Colonic mucosa (tissue), 4 donors: ENCODE measurements at regions of chr2 and their contacts with region 1.

Region 1: DNA sequence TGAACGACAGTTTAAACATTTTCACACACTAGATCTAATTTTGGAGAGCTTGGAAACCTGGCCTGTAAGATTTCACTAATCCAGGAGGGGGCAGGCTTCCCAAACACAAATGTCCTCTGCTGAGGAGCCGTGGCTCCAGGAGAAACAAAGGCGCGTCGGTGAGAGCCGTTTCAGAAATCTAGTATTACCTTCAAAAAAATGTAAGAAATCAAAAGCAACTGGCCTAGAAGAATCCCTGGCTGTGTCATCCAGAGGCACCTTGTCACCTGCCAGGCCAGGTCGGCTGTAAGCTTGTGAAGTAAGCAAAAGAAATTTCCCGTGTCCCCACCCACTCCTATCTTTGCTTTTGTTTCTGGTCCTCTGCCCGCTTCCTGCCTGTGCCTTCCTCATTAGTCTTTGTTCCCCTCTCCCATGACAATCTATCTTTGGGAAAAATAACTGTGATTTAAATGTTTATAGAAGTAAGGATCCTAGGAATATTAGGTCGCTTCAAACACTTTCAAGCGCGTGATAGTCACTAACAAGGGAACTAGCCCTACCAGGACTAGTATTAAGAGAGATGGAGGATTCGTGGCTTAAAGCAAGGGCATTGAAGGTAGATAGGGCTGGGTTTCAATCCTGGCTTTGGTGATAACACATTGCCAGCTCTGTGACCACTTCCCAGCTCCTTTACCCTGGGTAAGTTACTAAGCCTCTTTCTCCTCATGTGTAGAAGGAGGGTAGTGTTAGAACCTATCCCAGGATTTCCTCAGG is 99.5 kb upstream of the STK39 start:
- DNase-seq: peak; percentile 81
- H3K4me3 ChIP-seq: peak overlapping the region; percentile 32
- H3K27ac ChIP-seq: peak overlapping the region; percentile 26
- H3K4me1 ChIP-seq: no peaks in the 10 kb centered on the region
- H3K27me3 ChIP-seq: no peaks in the 10 kb centered on the region
- CTCF ChIP-seq: peak; percentile 75

Region 2: DNA sequence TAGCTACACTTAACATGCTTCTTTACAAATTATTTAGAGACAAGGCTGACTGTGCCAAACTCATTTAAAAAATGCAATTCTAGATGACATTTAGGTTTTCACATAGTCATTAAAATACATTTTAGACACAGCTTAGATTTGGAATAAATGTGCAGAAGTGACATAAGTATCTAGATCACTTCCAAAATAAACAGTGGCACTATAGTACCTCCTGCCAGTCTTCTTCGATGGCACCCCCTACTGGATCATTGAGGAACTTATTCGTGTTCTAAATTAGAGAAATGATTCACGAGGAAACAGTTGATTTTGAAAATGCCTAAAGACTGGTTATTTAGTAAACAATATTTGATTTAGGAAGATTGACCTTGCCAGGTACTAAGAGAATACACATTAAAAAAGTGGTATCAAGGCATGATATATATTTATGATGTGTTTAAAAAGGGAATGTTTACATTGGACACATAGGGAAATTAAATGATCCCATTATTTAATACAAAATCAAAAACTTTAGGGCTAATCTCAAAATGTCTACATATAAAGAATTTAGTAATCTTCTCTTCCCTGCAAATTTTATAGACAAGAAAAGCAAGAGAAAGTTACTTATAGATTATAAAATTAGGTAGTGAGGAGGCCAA is 1134.8 kb before region 1 on chr2:
- intact Hi-C with region 1: no loop called
- DNase-seq: peak; percentile 57
- H3K4me3 ChIP-seq: no peak overlapping the region
- H3K27ac ChIP-seq: no peak overlapping the region
- H3K4me1 ChIP-seq: no peaks in the 10 kb centered on the region
- H3K27me3 ChIP-seq: no peaks in the 10 kb centered on the region
- CTCF ChIP-seq: peak; percentile 63

Region 3: DNA sequence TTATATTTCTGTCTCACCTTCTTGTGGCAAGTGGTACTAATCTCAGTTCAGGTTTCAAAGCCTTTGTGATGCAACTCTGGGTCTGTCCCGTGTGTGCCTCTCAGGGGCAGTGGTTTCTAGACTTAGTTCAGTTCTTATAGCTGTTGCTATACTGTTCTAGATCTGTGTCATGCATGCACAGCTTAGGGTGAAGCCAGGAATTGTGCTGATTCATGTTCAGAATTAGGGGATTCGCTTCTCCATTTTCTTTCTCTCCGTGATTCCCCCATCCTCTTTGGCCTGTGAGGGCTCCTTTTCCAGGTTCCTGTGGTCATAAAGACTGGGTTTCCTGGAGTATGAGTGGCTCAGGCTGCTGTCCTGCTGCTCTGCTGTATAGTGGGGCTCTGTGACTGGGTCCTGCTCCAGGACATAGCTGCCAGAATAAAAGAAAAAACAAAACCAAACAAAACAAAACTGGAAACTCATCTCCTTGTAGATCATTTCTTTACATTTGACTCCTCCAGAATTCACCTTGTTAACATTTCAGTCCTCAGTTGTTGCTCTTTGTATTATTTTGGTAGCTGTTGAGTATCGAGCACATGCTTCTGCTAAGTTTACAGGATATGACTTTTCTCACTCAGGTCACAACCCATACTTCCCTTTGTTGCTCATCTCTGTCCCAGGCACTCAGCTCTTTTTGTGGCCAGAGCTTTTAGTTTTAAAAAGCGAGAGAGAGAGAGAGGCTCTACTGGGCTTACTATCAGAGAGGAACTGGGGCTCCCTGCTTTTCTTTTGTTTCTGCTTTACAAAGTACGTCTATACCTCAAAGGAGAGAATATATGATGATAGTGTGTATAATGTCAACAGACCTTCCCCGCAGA is 143.3 kb after region 1 on chr2:
- intact Hi-C with region 1: no loop called
- DNase-seq: no peak
- H3K4me3 ChIP-seq: no peak overlapping the region
- H3K27ac ChIP-seq: peak overlapping the region; percentile 56
- H3K4me1 ChIP-seq: no peaks in the 10 kb centered on the region
- H3K27me3 ChIP-seq: no peaks in the 10 kb centered on the region
- CTCF ChIP-seq: no peak

Region 4: DNA sequence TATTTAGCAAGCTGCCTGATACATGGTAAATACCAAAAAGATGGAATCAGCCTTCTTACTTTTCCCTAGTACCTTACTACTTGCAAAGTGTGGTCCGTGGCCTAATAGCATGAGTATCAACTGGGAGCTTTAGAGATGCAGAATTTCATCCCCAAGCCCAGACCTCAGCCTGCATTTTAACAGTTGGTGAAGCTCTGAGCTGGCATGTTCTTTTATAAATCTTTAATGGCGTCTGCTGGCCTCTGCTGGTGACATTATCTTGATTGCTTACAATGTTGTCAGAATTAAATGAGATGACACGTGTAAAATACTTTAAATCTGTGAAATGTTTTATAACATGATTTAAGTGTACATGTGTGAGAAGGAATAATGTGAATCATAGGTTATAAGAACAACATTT is 340.4 kb after region 1 on chr2:
- intact Hi-C with region 1: loop called (anchors 5 kb)
- DNase-seq: no peak
- H3K4me3 ChIP-seq: no peak overlapping the region
- H3K27ac ChIP-seq: no peak overlapping the region
- H3K4me1 ChIP-seq: no peaks in the 10 kb centered on the region
- H3K27me3 ChIP-seq: no peaks in the 10 kb centered on the region
- CTCF ChIP-seq: no peak

Region 5: DNA sequence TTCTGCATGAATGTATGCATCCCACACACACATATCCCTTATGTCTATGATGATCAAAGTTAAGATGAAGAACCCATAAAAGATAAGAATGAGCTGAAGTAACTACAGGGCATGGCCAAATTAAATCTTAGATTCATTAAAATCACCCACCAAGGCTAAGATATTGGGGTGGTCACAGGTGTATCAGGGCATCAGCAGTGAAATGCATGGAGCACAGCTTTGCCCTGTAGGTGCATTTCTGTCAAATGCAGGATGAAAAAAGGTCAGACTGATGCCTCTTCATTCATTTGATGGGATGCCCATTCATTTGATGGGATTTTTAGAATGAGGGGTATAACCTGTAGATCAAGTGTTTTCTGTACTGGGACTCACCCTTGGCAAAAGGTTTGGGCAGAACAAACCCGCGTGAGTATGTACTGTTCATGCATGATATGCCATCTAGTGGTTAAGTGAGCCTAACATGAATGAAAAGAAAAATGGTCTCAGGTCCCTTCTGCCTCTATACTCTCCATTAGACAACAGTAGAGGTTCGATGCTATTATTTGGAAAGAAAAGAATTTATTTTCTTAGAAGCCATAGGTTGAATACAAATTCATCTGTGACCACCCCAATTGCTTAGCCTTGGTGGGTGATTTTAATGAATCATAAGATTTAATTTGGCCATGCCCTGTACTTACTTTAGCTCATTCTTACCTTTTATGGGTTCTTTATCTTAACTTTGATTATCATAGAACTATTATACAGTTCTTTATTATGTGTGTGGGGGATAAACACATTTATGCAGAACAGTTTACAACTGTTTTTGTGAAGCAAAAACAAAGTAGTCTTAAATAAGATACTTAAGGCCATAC is 412.3 kb after region 1 on chr2:
- intact Hi-C with region 1: loop called (anchors 5 kb)
- DNase-seq: no peak
- H3K4me3 ChIP-seq: no peak overlapping the region
- H3K27ac ChIP-seq: no peak overlapping the region
- H3K4me1 ChIP-seq: no peaks in the 10 kb centered on the region
- H3K27me3 ChIP-seq: no peaks in the 10 kb centered on the region
- CTCF ChIP-seq: peak; percentile 50

Region 6: GRCh38 chr2:168920504-168921157 is 573.7 kb after region 1 on chr2:
- intact Hi-C with region 1: loop called (anchors 5 kb)
- DNase-seq: no peak
- H3K4me3 ChIP-seq: no peak overlapping the region
- H3K27ac ChIP-seq: no peak overlapping the region
- H3K4me1 ChIP-seq: no peaks in the 10 kb centered on the region
- H3K27me3 ChIP-seq: no peaks in the 10 kb centered on the region
- CTCF ChIP-seq: peak; percentile 71